ENCODE measurements at regions of chr9 and their contacts with region 1.

Region 1: DNA sequence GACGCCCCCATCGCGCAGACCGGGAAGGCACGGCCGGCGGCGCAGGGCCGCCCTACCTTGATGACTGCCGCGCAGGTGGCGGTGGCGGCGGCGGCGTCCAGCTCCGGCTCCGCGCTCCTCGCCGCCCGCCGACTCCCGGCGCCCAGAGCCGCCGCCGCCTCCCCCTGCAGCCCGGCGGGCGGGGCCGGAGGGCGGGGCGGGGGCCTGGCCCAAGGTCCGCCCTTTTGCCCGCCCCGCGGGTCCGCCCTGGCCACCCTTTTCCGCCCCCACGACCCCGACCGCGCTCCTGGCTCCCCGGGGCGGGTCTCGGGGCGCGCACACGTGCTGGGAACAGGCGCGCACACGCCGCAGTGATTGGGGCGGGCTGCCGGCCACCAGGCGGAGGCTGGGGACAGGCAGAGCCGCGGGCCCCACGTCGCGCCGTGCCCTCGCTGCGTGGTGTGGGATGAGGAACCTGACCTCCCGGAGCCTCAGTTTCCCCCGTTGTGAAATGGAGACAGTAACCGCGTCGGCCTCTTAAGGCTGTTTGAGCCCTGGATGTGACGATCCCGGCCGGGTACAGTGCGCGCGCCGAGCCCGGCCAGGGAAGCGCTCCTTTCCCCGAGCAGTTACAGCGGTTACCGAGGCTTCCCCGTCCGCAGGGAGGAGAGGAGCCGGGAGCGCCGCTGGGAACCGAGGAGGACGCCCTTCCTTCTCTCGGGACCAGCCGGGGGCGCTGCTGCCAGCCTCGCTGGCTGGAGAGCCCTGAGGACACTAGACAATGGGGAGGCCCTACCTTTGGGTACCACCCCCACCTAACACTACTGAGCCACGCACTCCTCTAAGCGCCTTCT is at the start of gene CORO2A:
- DNase-seq: peak; percentile 33
- ATAC-seq: peak; percentile 81
- H3K4me3 ChIP-seq: peak within 1 kb of the TSS; percentile 62 to 77
- H3K27ac ChIP-seq: peak within 1 kb of the TSS; percentile 47
- H3K4me1 ChIP-seq: peaks cover 0 to 20% of the 10 kb centered on the region in 2 experiments; a peak in 2 of 4 replicates
- H3K27me3 ChIP-seq: no peaks in the 10 kb centered on the region
- CTCF ChIP-seq: peak; percentile 29 to 42 (median 38); a peak in 5 of 6 replicates
- POLR2A ChIP-seq: no peak
- RAD21 ChIP-seq: peak; percentile 43
- total RNA-seq, gene CORO2A: 5.7 TPM

Region 2: GRCh38 chr9:98118640-98119601 is 73.8 kb before region 1 on chr9 and contains the start of gene TRIM14:
- CTCF ChIA-PET with region 1: interaction called, 4 read pairs
- POLR2A ChIA-PET with region 1: no interaction called
- RAD21 ChIA-PET with region 1: no interaction called
- intact Hi-C with region 1: loop called (anchors 2 kb)
- DNase-seq: peak; percentile 18
- ATAC-seq: peak; percentile 87
- H3K4me3 ChIP-seq: peak within 1 kb of the TSS; percentile 51 to 82
- H3K27ac ChIP-seq: peak within 1 kb of the TSS; percentile 81
- H3K4me1 ChIP-seq: peaks cover 8 to 33% of the 10 kb centered on the region in 2 experiments; a peak in 3 of 4 replicates
- H3K27me3 ChIP-seq: no peaks in the 10 kb centered on the region
- CTCF ChIP-seq: peak in 2 of 3 experiments; percentile 11 to 24; a peak in 2 of 6 replicates
- POLR2A ChIP-seq: no peak
- RAD21 ChIP-seq: peak; percentile 52
- total RNA-seq, gene TRIM14: 24.4 TPM

Region 3: DNA sequence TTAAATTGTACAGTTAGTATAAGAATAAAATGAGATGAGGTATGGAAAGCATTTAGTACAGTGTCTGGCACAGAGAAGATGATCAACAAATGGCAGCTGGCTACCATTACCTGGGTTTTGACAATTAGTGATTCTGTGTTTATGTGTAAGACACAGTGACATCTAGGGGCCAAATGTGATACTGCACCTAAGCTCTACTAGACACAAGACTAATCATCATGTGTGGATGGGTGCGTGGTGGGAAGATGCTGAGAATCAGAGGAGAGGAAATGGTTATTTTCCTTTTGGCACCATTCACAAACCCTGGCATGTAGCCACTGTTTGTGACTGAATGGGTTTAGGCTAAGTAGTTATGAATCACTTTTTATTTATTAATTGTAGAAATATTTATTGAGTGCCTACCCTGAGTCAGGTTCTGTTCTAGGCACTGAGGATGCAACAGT is 172.5 kb after region 1 on chr9:
- CTCF ChIA-PET with region 1: no interaction called
- POLR2A ChIA-PET with region 1: no interaction called
- RAD21 ChIA-PET with region 1: no interaction called
- intact Hi-C with region 1: no loop called
- DNase-seq: peak; percentile 41
- ATAC-seq: no peak
- H3K4me3 ChIP-seq: no peak overlapping the region
- H3K27ac ChIP-seq: no peak overlapping the region
- H3K4me1 ChIP-seq: no peaks in the 10 kb centered on the region
- H3K27me3 ChIP-seq: no peaks in the 10 kb centered on the region
- CTCF ChIP-seq: peak; percentile 10 to 81 (median 59); a peak in 4 of 6 replicates
- POLR2A ChIP-seq: no peak
- RAD21 ChIP-seq: no peak